GM13977 (cell line): ENCODE measurements at regions of chr2 and their contacts with region 1.

Region 1: GRCh38 chr2:119407430-119408220 is 24.0 kb upstream of the TMEM37 start:
- DNase-seq: peak; percentile 63
- CTCF ChIP-seq: peak; percentile 78

Region 2: DNA sequence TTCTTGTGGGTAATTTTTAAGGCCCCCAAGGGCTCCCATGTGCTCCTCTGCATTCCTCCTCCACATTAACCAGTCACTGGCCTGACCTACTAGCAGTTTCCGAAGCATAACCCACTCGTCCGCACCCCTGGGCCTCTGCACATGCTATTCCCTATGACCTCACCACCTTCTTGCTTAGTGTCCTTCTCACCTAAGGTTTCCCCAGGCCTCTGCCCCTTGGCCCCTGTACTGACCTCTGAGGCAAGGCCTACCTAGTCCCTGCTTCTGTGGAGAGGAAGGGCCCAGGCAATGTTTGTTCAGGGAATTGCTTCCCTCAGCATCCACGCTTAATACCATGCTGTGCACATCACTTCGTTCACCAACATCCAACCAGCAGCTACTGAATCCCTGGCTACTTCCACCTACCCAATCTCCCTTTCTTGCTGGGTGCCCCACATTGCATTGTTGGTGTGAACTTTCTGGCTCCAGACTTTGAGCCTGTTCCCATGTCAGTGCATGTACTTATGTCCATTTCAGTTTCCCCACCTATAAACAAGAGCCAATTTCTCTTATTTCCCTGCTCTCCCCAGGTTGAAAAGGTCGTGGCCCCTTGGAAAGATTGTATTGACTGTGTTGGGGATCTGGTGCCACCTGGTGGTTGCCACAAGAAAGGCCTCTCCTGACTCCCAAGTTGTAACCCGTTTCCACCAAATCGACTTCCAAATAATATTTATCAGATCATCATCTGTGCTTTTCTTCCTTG is 252.1 kb after region 1 on chr2:
- in situ Hi-C with region 1: loop called (anchors 25 kb)
- DNase-seq: no peak
- CTCF ChIP-seq: peak; percentile 85